Activated CD4-positive, alpha-beta T cell treated with anti-CD3 and anti-CD28 coated beads for 36 hours (primary cell): ENCODE measurements at regions of chr20 and their contacts with region 1.

Region 1: GRCh38 chr20:49699200-49699992 is 14.3 kb downstream of the B4GALT5 start:
- DNase-seq: peak; percentile 47
- ATAC-seq: peak; percentile 87
- H3K4me3 Mint-ChIP-seq: peak overlapping the region; percentile 34
- H3K27ac Mint-ChIP-seq: peak overlapping the region; percentile 73
- H3K4me1 Mint-ChIP-seq: peaks cover 66% of the 10 kb centered on the region
- H3K27me3 Mint-ChIP-seq: no peaks in the 10 kb centered on the region

Region 2: DNA sequence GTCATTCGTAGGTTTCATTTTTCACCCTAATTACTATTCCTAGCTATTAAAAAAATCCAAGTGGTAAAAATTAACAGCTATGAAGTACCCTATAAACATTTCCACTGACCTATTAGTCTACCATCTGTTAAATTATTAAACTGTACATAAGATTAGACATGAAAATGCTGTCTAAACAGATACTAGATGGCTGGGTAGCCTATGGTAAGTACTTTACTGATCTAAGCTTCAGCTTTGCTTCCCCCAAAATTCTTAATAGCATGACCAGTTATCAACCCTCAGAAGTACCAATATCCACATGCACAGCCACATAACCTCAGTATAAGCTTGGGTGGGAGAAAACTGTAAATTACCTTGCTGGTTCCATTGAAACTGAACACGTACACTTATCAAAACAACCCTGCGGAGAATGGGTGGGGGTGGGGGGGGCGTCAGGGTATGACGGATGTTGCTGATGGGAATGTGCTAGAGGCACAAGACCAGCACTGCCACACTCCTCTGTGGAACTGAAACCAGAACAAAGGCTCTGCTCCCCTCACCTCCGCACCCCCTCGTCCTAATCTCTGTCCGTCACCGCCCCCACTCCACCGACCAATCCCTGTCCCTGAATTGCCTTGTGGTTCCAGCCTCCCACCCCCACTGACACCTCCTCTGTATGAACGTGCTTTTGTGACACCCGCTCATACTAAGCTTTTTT is 31.1 kb before region 1 on chr20:
- CTCF ChIA-PET with region 1: no interaction called
- POLR2A ChIA-PET with region 1: interaction called, 3 read pairs
- intact Hi-C with region 1: loop called in 1 of 2 experiments (anchors 2 kb)
- DNase-seq: peak; percentile 77
- ATAC-seq: peak; percentile 69
- H3K4me3 Mint-ChIP-seq: peak overlapping the region; percentile 47
- H3K27ac Mint-ChIP-seq: peak overlapping the region; percentile 72
- H3K4me1 Mint-ChIP-seq: peaks cover 40% of the 10 kb centered on the region
- H3K27me3 Mint-ChIP-seq: no peaks in the 10 kb centered on the region

Region 3: DNA sequence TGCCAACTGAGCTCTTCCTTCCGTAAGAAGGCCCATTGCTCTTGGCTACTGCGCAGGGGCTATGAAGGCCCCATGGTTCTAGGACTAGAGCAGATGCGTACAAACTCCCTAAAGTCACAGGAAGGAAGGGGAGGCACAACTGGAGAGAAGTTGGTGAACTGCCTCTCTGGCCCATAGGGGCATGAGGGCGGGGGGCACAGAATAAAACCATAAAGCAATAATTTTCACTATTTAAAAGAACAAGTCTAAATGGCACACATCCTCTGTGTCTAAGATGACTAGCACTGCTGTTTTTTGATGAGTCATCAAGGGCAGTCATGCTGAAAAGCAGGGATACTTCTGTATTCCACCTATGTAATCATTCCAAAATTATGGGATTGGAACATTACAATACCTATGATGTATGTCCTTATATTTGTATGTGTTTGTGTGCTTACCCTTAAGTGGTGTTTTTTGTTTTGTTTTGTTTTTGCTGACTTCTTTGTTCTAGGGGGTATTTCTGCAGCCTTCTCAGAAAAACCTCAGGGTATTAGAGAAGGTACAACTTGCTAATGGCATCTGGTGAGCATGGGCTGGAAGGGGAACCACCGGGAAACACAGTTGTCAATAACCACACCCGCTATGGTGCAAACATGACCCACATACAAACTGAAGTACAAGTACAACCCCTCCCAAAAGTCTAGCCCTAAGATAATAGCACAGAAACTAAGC is 22.7 kb before region 1 on chr20:
- CTCF ChIA-PET with region 1: interaction called, 7 read pairs
- POLR2A ChIA-PET with region 1: no interaction called
- intact Hi-C with region 1: loop called (anchors 1 to 2 kb)
- DNase-seq: peak; percentile 51
- ATAC-seq: peak; percentile 66
- H3K4me3 Mint-ChIP-seq: no peak overlapping the region
- H3K27ac Mint-ChIP-seq: peak overlapping the region; percentile 27
- H3K4me1 Mint-ChIP-seq: peaks cover 59% of the 10 kb centered on the region
- H3K27me3 Mint-ChIP-seq: no peaks in the 10 kb centered on the region